Heart left ventricle (tissue), 16 donors: ENCODE measurements at regions of chr3 and their contacts with region 1.

Region 1: DNA sequence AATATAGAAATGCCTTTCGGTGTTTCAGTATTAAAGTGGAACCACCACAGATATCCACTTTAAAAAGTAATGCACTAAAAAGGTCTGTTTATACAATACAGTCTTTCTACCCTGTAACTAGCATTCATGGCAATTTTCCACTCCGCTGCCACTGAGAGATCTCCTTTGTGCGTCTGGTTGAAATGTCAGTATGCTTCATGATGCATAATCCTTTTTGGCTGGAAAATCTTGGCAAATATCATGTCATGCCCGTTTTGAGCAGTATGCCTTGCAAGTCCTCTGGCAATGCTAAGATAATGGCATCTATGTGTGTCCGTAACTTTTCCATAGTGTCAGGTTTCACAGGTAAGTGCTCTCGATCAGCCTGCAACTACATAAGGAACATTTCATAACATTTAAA is 30.8 kb upstream of the ARF4 start:
- DNase-seq: no peak
- ATAC-seq: no peak
- H3K4me3 ChIP-seq: no peak overlapping the region
- H3K27ac ChIP-seq: no peak overlapping the region
- H3K4me1 ChIP-seq: no peaks in the 10 kb centered on the region
- H3K27me3 ChIP-seq: no peaks in the 10 kb centered on the region
- CTCF ChIP-seq: no peak
- POLR2A ChIP-seq: no peak

Region 2: GRCh38 chr3:57397175-57398026 is 230.6 kb before region 1 on chr3:
- intact Hi-C with region 1: loop called in 1 of 10 experiments (anchors 5 kb)
- DNase-seq: peak in 3 of 5 donors; percentile 18 to 29 (median 23)
- ATAC-seq: peak in 3 of 4 donors; percentile 66 to 85 (median 75)
- H3K4me3 ChIP-seq: no peak overlapping the region
- H3K27ac ChIP-seq: no peak overlapping the region
- H3K4me1 ChIP-seq: peaks cover 0 to 4% (median 0%) of the 10 kb centered on the region in 12 donors
- H3K27me3 ChIP-seq: no peaks in the 10 kb centered on the region
- CTCF ChIP-seq: peak; percentile 58 to 79 (median 73)
- POLR2A ChIP-seq: no peak

Region 3: GRCh38 chr3:57544181-57545125 is 83.5 kb before region 1 on chr3 and contains the start of gene DNAH12:
- intact Hi-C with region 1: no loop called
- DNase-seq: no peak
- ATAC-seq: peak in 2 of 4 donors; percentile 18 to 19
- H3K4me3 ChIP-seq: peak within 1 kb of the TSS in 8 of 12 donors; percentile 18 to 51 (median 31)
- H3K27ac ChIP-seq: peak within 1 kb of the TSS in 1 of 12 donors; percentile 75
- H3K4me1 ChIP-seq: peaks cover 0 to 21% (median 10%) of the 10 kb centered on the region in 12 donors
- H3K27me3 ChIP-seq: no peaks in the 10 kb centered on the region
- CTCF ChIP-seq: no peak
- POLR2A ChIP-seq: no peak
- total RNA-seq, gene DNAH12: 0.20 to 0.42 (median 0.32) TPM in 3 of 9 donors, not detected in the others

Region 4: DNA sequence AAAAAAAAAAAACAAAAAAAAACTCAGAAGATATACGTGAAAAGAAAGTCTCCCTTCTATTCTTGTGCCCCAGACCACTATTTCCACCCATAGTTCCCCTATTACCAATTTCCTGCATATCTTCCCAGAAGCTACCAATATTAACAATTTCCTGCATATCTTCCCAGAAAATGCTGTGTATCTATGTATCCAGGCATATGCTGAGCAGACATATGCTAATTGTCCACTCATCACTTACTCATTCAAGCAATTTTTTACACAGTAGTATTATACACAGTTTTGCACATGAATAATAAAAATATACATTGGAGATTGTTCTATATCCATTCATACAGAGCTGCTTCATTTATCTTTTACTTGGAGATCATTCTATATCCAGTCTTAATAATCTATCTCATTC is 115.5 kb after region 1 on chr3:
- intact Hi-C with region 1: no loop called
- DNase-seq: no peak
- ATAC-seq: no peak
- H3K4me3 ChIP-seq: no peak overlapping the region
- H3K27ac ChIP-seq: no peak overlapping the region
- H3K4me1 ChIP-seq: peaks cover 0 to 7% (median 4%) of the 10 kb centered on the region in 12 donors
- H3K27me3 ChIP-seq: no peaks in the 10 kb centered on the region
- CTCF ChIP-seq: no peak
- POLR2A ChIP-seq: no peak